ENCODE measurements at regions of chrX and their contacts with region 1.

Region 1: DNA sequence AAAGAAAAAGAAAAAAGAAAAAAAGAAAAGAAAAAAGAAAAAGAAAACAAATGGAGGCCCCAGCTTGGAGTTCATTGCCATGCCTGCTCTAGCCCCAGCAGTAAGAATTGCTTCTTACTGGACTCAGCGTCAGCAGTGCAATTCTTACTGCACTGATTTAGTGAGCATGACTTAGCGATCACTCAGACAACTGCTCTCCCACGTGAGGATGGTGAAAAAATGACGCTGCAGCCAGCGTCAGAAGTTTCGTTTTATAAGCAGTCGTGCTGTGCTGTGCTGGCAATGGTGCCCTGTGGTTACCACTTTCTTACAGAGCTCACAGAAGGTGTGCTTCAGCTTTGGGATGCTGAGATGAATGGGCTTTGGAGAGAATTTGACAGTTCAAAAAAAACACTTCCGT is 68.3 kb upstream of the DDX3X start:
- DNase-seq: peak; percentile 59
- H3K4me3 ChIP-seq: no peak overlapping the region
- H3K27ac ChIP-seq: no peak overlapping the region
- H3K4me1 ChIP-seq: no peaks in the 10 kb centered on the region
- H3K27me3 ChIP-seq: no peaks in the 10 kb centered on the region
- CTCF ChIP-seq: no peak

Region 2: GRCh38 chrX:40871385-40872082 is 394.1 kb before region 1 on chrX:
- CTCF ChIA-PET with region 1: no interaction called
- POLR2A ChIA-PET with region 1: no interaction called
- intact Hi-C with region 1: no loop called
- DNase-seq: peak; percentile 29
- H3K4me3 ChIP-seq: no peak overlapping the region
- H3K27ac ChIP-seq: peak overlapping the region; percentile 29
- H3K4me1 ChIP-seq: peaks cover 7% of the 10 kb centered on the region
- H3K27me3 ChIP-seq: no peaks in the 10 kb centered on the region
- CTCF ChIP-seq: no peak

Region 3: DNA sequence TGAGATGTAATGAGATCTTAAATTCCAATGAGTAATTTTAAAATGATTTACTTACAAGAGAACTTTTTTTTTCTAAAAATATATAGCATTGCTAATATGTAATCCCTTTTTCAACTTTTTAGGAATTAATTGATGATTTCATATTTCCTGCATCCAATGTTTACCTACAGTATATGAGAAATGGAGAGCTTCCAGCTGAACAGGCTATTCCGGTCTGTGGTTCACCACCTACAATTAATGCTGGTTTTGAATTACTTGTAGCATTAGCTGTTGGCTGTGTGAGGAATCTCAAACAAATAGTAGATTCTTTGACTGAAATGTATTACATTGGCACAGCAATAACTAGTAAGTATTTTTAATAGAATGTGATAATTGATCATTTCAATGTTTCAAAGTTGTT is 67.2 kb before region 1 on chrX:
- CTCF ChIA-PET with region 1: no interaction called
- POLR2A ChIA-PET with region 1: no interaction called
- intact Hi-C with region 1: no loop called
- DNase-seq: no peak
- H3K4me3 ChIP-seq: no peak overlapping the region
- H3K27ac ChIP-seq: no peak overlapping the region
- H3K4me1 ChIP-seq: no peaks in the 10 kb centered on the region
- H3K27me3 ChIP-seq: no peaks in the 10 kb centered on the region
- CTCF ChIP-seq: no peak

Region 4: DNA sequence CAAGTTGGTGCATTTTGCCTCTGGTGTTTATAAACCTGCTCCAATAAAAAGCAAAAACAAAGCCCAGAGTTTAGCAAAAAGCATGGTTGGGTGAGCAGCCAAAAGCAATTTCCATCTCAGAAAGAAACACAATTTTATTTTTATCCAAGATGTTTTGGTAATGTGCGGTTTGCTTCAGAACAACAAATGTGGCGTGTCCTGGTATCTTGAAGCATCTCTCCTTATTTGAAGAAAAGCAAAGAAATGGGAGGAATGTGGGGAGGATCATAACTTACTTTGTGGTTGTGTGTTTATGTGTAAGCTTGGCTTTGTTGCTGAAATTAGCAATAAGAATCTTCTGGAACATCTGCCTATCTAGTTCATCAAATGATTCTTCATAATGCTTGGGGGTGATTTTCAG is 20.0 kb before region 1 on chrX:
- CTCF ChIA-PET with region 1: interaction called, 10 read pairs
- POLR2A ChIA-PET with region 1: no interaction called
- intact Hi-C with region 1: no loop called
- DNase-seq: no peak
- H3K4me3 ChIP-seq: no peak overlapping the region
- H3K27ac ChIP-seq: no peak overlapping the region
- H3K4me1 ChIP-seq: no peaks in the 10 kb centered on the region
- H3K27me3 ChIP-seq: no peaks in the 10 kb centered on the region
- CTCF ChIP-seq: no peak

Measured in A673 (cell line).